GM13976 (cell line): ENCODE measurements at regions of chr1 and their contacts with region 1.

Region 1: GRCh38 chr1:178308438-178308837 is 188.3 kb downstream of the CLEC20A start:
- DNase-seq: no peak
- CTCF ChIP-seq: no peak

Region 2: GRCh38 chr1:178501705-178502329 is 193.4 kb after region 1 on chr1:
- in situ Hi-C with region 1: loop called (anchors 10 kb)
- DNase-seq: peak; percentile 87
- CTCF ChIP-seq: peak; percentile 79